Brain microvascular endothelial cell (primary cell): ENCODE measurements at regions of chr1 and their contacts with region 1.

Region 1: DNA sequence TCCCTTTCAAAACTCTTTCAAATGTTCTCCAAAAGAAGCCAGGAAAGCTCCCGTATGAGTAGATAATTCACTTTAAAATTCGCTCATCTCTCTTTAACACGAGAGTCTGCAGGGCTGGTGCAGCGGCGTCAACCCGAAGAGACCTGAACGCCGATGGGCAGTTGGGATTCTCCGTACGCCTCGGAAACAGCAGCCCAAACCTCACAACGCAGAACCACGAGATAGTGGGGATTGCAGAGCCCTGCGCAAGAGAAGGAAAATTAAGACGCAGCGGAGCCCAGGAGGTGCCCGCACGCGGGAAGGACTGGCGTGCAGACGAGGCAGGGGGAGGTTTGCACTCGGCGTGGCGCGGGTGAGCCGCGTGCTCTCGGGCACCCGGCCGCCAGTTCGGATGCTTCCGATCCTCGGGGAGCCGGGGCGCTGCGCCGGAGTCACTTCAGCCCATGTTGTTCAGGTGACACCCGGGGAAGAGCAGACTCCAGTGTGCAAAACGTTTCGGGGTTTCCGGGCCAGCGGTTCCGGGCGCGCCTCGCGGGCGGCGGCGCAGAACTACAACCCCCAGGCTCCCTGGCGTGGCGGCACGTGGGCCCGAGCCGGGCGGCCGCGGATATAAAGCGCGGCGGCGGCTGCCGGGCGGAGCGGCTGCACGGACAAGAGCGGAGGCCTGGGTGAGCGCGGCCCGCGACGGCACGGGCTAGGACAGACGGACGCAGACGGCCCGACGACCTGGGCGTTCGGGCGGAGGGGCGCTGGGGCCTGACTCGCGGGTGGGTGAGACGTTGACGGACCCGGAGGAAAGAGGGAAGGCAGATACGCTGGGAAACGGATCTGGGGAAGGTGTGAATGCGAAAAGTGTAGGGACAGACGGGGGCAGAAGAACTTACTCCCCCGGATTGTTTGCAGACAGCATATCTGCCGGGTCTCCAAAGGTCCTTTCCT is at the start of gene NPL:
- DNase-seq: peak; percentile 48
- H3K4me3 ChIP-seq: peak within 1 kb of the TSS; percentile 68
- H3K27ac ChIP-seq: no peak within 1 kb of the TSS
- H3K27me3 ChIP-seq: no peaks in the 10 kb centered on the region
- CTCF ChIP-seq: no peak

Region 2: DNA sequence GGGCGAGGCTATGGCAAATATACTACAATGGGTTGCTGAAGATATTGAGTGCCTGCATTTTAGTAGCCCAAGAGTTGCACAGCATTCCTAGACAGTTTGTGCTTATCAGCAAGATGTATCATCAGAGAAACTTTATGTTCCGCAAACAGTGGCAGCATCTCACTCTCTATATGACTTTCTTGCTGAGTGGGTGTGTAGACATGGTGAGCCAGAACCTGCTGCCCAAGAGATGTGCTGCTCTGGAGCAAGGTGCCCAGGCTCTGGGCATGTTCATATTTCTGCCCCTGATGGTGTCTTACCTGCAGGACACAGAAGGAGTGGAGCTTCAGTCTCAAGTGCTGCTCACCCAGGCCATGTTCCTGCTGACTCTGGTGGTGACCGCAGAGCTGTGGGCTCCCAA is 347.7 kb before region 1 on chr1:
- in situ Hi-C with region 1: no loop called
- DNase-seq: no peak
- H3K4me3 ChIP-seq: no peak overlapping the region
- H3K27ac ChIP-seq: no peak overlapping the region
- H3K27me3 ChIP-seq: no peaks in the 10 kb centered on the region
- CTCF ChIP-seq: no peak

Region 3: GRCh38 chr1:182595641-182596240 is 193.7 kb before region 1 on chr1:
- in situ Hi-C with region 1: loop called (anchors 10 kb)
- DNase-seq: peak; percentile 76
- H3K4me3 ChIP-seq: no peak overlapping the region
- H3K27ac ChIP-seq: no peak overlapping the region
- H3K27me3 ChIP-seq: no peaks in the 10 kb centered on the region
- CTCF ChIP-seq: peak; percentile 94

Region 4: DNA sequence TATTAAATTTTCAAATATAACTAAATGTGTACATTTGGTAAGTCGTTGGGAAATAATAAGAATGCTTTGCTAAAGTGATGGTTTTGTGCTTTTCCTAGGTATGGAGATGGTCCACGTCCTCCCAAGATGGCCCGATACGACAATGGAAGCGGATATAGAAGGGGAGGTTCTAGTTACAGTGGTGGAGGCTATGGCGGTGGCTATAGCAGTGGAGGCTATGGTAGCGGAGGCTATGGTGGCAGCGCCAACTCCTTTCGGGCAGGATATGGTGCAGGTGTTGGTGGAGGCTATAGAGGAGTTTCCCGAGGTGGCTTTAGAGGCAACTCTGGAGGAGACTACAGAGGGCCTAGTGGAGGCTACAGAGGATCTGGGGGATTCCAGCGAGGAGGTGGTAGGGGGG is 97.6 kb after region 1 on chr1:
- in situ Hi-C with region 1: no loop called
- DNase-seq: no peak
- H3K4me3 ChIP-seq: no peak overlapping the region
- H3K27ac ChIP-seq: no peak overlapping the region
- H3K27me3 ChIP-seq: no peaks in the 10 kb centered on the region
- CTCF ChIP-seq: no peak

Region 5: GRCh38 chr1:182897696-182898095 is 108.3 kb after region 1 on chr1:
- in situ Hi-C with region 1: no loop called
- DNase-seq: no peak
- H3K4me3 ChIP-seq: no peak overlapping the region
- H3K27ac ChIP-seq: no peak overlapping the region
- H3K27me3 ChIP-seq: no peaks in the 10 kb centered on the region
- CTCF ChIP-seq: no peak

Region 6: DNA sequence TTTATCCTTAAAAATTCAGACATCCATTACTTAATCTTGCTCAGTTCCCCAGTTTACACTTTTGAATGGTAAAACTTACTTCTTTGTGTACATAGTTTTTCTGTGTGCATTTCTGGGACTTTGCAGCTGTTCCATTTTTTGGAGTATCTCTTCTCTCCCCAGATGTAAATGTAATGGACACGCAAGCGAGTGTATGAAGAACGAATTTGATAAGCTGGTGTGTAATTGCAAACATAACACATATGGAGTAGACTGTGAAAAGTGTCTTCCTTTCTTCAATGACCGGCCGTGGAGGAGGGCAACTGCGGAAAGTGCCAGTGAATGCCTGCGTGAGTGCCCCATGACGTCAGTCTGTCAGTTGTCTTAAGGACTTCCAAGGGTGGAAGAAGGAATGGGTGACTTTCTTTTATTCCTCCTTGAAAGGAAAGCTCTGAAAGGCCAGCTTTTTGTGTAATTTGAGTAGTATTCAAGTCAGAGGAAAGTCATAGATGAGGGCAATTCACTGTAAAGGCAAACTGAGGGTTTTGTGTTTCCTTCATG is 321.0 kb after region 1 on chr1:
- in situ Hi-C with region 1: no loop called
- DNase-seq: no peak
- H3K4me3 ChIP-seq: no peak overlapping the region
- H3K27ac ChIP-seq: no peak overlapping the region
- H3K27me3 ChIP-seq: no peaks in the 10 kb centered on the region
- CTCF ChIP-seq: no peak